ENCODE measurements at regions of chr4 and their contacts with region 1.

Region 1: GRCh38 chr4:71184195-71184781 is 154.5 kb upstream of the SLC4A4 start:
- DNase-seq: peak in 1 of 2 donors; percentile 75
- ATAC-seq: peak in 2 of 3 donors; percentile 26 to 33
- H3K4me3 ChIP-seq: no peak overlapping the region
- H3K4me3 Mint-ChIP-seq: peak overlapping the region; percentile 71
- H3K27ac ChIP-seq: no peak overlapping the region
- H3K27ac Mint-ChIP-seq: peak overlapping the region; percentile 64 to 88
- H3K4me1 ChIP-seq: peaks cover 9% of the 10 kb centered on the region
- H3K4me1 Mint-ChIP-seq: peaks cover 34 to 35% of the 10 kb centered on the region in 2 donors
- H3K27me3 ChIP-seq: no peaks in the 10 kb centered on the region
- H3K27me3 Mint-ChIP-seq: no peaks in the 10 kb centered on the region
- CTCF ChIP-seq: peak; percentile 72

Region 2: GRCh38 chr4:70839589-70840093 is 344.6 kb before region 1 on chr4 and contains the start of gene GRSF1:
- intact Hi-C with region 1: loop called (anchors 10 kb)
- DNase-seq: peak; percentile 89 to 97
- ATAC-seq: peak; percentile 88 to 97 (median 88)
- H3K4me3 ChIP-seq: peak within 1 kb of the TSS; percentile 46
- H3K4me3 Mint-ChIP-seq: peak within 1 kb of the TSS; percentile 98
- H3K27ac ChIP-seq: peak within 1 kb of the TSS; percentile 80
- H3K27ac Mint-ChIP-seq: peak within 1 kb of the TSS; percentile 95 to 97
- H3K4me1 ChIP-seq: peaks cover 23% of the 10 kb centered on the region
- H3K4me1 Mint-ChIP-seq: peaks cover 20 to 27% of the 10 kb centered on the region in 2 donors
- H3K27me3 ChIP-seq: no peaks in the 10 kb centered on the region
- H3K27me3 Mint-ChIP-seq: no peaks in the 10 kb centered on the region
- CTCF ChIP-seq: no peak
- total RNA-seq, gene GRSF1: 33.4 to 50.8 (median 43.0) TPM

Region 3: DNA sequence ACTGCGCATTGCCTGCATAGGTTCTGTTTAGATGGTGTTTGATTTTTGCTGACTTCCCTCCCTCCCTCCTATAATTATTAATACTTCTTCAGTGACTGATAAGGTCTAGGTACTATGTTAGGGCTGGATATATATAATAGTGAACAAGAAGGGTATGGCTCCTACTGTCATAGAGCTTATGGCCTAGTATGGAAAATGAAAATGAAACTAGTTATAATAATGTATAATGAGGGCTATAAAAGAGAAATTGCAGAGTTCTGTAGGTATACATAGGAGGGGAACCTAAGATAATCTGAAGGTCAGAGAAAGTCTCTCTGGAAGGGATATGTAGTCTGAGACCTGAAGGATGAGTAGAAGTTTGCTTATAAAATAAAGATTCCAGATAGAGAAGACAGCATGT is 88.7 kb before region 1 on chr4:
- intact Hi-C with region 1: no loop called
- DNase-seq: peak in 1 of 2 donors; percentile 15
- ATAC-seq: peak; percentile 72 to 97 (median 84)
- H3K4me3 ChIP-seq: no peak overlapping the region
- H3K4me3 Mint-ChIP-seq: peak overlapping the region; percentile 84
- H3K27ac ChIP-seq: peak overlapping the region; percentile 58
- H3K27ac Mint-ChIP-seq: peak overlapping the region; percentile 67 to 72
- H3K4me1 ChIP-seq: peaks cover 9% of the 10 kb centered on the region
- H3K4me1 Mint-ChIP-seq: peaks cover 17 to 24% of the 10 kb centered on the region in 2 donors
- H3K27me3 ChIP-seq: no peaks in the 10 kb centered on the region
- H3K27me3 Mint-ChIP-seq: no peaks in the 10 kb centered on the region
- CTCF ChIP-seq: no peak

Region 4: DNA sequence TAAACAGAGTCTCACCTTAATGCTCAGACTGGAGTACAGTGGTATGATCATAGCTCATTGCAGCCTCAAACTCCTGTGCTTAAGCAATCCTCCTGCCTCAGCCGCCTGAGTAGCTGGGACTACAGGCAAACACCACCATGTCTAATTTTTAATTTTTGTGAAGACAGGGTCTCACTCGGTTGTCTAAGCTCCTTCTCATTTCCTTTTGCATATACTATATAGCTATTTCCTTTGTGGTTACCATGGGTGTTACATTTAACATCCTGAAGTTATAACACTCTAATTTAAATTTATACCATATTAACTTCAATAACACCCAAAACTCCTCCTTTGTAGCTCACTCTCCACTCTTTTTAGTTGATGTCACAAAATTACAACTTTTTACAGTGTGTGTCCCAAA is 76.6 kb before region 1 on chr4:
- intact Hi-C with region 1: loop called (anchors 5 kb)
- DNase-seq: peak in 1 of 2 donors; percentile 57
- ATAC-seq: peak; percentile 94 to 98 (median 97)
- H3K4me3 ChIP-seq: no peak overlapping the region
- H3K4me3 Mint-ChIP-seq: peak overlapping the region; percentile 98
- H3K27ac ChIP-seq: peak overlapping the region; percentile 77
- H3K27ac Mint-ChIP-seq: peak overlapping the region; percentile 90 to 99
- H3K4me1 ChIP-seq: peaks cover 28% of the 10 kb centered on the region
- H3K4me1 Mint-ChIP-seq: peaks cover 44 to 50% of the 10 kb centered on the region in 2 donors
- H3K27me3 ChIP-seq: no peaks in the 10 kb centered on the region
- H3K27me3 Mint-ChIP-seq: no peaks in the 10 kb centered on the region
- CTCF ChIP-seq: no peak

Region 5: DNA sequence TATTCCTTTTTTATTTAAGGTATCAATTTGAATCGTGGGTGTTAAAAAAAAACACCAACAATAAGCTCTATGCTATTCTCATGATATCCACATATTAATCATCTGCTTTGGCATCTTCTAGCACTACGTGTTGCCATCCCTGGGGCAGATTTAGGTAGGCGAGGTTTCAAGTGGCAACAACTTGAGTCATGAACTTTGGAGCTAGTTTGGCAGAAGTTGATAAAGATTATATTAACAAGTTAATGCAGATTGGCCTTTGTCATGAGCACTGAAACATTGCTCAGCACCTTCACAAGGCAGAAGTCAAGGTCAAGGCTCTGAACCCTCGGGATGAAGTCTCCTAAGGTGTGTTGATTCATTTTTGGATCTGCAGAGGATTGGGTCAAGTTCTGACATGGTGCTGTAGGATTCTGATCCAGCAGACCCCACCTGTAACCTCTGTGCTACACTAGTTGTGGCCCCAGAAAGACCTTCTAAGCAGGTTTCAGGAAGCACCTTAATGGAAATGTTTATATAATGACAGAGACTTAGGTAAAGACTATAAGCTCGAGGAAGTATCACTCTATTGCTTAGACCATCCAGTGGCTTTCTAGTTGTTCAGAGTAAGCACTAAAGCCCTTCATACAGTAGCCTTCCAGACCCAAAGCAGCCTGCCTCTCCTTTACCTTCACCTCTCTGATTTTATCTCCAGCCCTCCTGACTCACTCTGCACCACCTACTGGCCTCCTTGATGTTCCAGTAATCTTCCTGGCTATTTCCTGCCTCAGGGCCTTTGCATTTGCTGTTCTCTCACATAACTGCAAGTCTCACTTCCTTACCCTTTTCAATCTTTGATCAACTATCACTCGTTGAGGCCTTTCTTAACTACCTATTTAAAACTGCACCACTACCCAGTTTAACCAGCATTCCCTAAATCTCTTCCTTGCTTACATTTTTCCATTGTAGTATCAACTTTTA is 37.5 kb after region 1 on chr4:
- intact Hi-C with region 1: loop called (anchors 5 kb)
- DNase-seq: no peak
- ATAC-seq: no peak
- H3K4me3 ChIP-seq: no peak overlapping the region
- H3K4me3 Mint-ChIP-seq: no peak overlapping the region
- H3K27ac ChIP-seq: no peak overlapping the region
- H3K27ac Mint-ChIP-seq: peak overlapping the region in 1 of 2 donors; percentile 29
- H3K4me1 ChIP-seq: peaks cover 6% of the 10 kb centered on the region
- H3K4me1 Mint-ChIP-seq: peaks cover 35 to 40% of the 10 kb centered on the region in 2 donors
- H3K27me3 ChIP-seq: no peaks in the 10 kb centered on the region
- H3K27me3 Mint-ChIP-seq: no peaks in the 10 kb centered on the region
- CTCF ChIP-seq: no peak

Region 6: GRCh38 chr4:71553605-71554004 is 369.3 kb after region 1 on chr4:
- intact Hi-C with region 1: loop called (anchors 1 kb)
- DNase-seq: peak in 1 of 2 donors; percentile 17
- ATAC-seq: peak in 2 of 3 donors; percentile 74 to 78
- H3K4me3 ChIP-seq: no peak overlapping the region
- H3K4me3 Mint-ChIP-seq: no peak overlapping the region
- H3K27ac ChIP-seq: no peak overlapping the region
- H3K27ac Mint-ChIP-seq: no peak overlapping the region
- H3K4me1 ChIP-seq: no peaks in the 10 kb centered on the region
- H3K4me1 Mint-ChIP-seq: no peaks in the 10 kb centered on the region
- H3K27me3 ChIP-seq: no peaks in the 10 kb centered on the region
- H3K27me3 Mint-ChIP-seq: no peaks in the 10 kb centered on the region
- CTCF ChIP-seq: peak; percentile 25